ENCODE measurements at regions of chr5 and their contacts with region 1.

Region 1: DNA sequence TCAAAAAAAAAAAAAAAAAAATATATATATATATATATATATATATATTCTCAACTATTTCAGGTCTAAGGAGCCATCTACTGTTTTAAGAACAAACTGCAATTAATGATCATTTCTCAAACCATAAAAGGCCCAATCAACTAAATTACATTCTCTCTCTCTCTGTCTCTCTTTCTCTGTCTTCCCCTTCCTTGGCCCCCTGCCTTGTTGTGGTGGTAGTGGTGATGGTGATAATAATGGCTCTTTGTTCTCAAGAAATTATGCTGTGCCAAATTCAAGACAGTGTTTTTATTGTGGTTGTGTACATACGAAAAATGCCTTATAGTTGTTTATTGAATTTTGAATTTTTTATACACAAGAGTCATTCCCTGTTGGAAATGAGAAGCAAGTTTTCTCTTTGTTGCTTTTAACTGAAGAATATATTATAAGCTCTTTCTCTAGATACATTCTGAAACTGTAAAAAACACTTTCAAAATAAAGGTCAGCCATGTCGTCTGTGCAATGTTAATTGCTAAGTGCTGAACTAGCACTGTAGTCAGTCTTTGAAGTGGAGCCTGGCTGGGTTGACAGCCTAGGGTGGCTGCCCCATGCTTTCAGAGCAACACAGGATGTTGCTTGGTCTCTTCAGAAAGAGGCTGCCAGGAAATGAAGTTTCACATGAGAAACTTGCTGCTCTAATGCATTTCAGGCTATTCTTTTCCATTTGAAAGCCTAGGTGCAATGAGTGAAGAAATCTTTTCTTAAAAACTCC is 96.0 kb downstream of the HINT1 start:
- DNase-seq: peak; percentile 87
- H3K4me3 Mint-ChIP-seq: no peak overlapping the region
- H3K27ac Mint-ChIP-seq: peak overlapping the region; percentile 94
- H3K4me1 Mint-ChIP-seq: peaks cover 55% of the 10 kb centered on the region
- H3K27me3 Mint-ChIP-seq: no peaks in the 10 kb centered on the region

Region 2: GRCh38 chr5:130282049-130282448 is 787.0 kb before region 1 on chr5:
- CTCF ChIA-PET with region 1: no interaction called
- intact Hi-C with region 1: no loop called
- DNase-seq: no peak
- H3K4me3 Mint-ChIP-seq: no peak overlapping the region
- H3K27ac Mint-ChIP-seq: no peak overlapping the region
- H3K4me1 Mint-ChIP-seq: no peaks in the 10 kb centered on the region
- H3K27me3 Mint-ChIP-seq: peaks cover 3% of the 10 kb centered on the region

Region 3: GRCh38 chr5:130871346-130872086 is 197.6 kb before region 1 on chr5:
- CTCF ChIA-PET with region 1: interaction called, 11 read pairs
- intact Hi-C with region 1: loop called (anchors 1 kb)
- DNase-seq: peak; percentile 53
- H3K4me3 Mint-ChIP-seq: no peak overlapping the region
- H3K27ac Mint-ChIP-seq: no peak overlapping the region
- H3K4me1 Mint-ChIP-seq: no peaks in the 10 kb centered on the region
- H3K27me3 Mint-ChIP-seq: no peaks in the 10 kb centered on the region

Region 4: GRCh38 chr5:131081374-131081773 is 12.3 kb after region 1 on chr5:
- CTCF ChIA-PET with region 1: interaction called, 6 read pairs
- intact Hi-C with region 1: loop called (anchors 1 kb)
- DNase-seq: no peak
- H3K4me3 Mint-ChIP-seq: no peak overlapping the region
- H3K27ac Mint-ChIP-seq: no peak overlapping the region
- H3K4me1 Mint-ChIP-seq: peaks cover 18% of the 10 kb centered on the region
- H3K27me3 Mint-ChIP-seq: no peaks in the 10 kb centered on the region

Region 5: GRCh38 chr5:131096774-131097710 is 28.0 kb after region 1 on chr5:
- CTCF ChIA-PET with region 1: interaction called, 4 read pairs
- intact Hi-C with region 1: loop called (anchors 1 kb)
- DNase-seq: no peak
- H3K4me3 Mint-ChIP-seq: no peak overlapping the region
- H3K27ac Mint-ChIP-seq: no peak overlapping the region
- H3K4me1 Mint-ChIP-seq: peaks cover 13% of the 10 kb centered on the region
- H3K27me3 Mint-ChIP-seq: no peaks in the 10 kb centered on the region

Region 6: GRCh38 chr5:131104169-131104808 is 35.2 kb after region 1 on chr5:
- CTCF ChIA-PET with region 1: interaction called, 4 read pairs
- intact Hi-C with region 1: loop called (anchors 1 kb)
- DNase-seq: no peak
- H3K4me3 Mint-ChIP-seq: no peak overlapping the region
- H3K27ac Mint-ChIP-seq: no peak overlapping the region
- H3K4me1 Mint-ChIP-seq: peaks cover 12% of the 10 kb centered on the region
- H3K27me3 Mint-ChIP-seq: no peaks in the 10 kb centered on the region

Region 7: DNA sequence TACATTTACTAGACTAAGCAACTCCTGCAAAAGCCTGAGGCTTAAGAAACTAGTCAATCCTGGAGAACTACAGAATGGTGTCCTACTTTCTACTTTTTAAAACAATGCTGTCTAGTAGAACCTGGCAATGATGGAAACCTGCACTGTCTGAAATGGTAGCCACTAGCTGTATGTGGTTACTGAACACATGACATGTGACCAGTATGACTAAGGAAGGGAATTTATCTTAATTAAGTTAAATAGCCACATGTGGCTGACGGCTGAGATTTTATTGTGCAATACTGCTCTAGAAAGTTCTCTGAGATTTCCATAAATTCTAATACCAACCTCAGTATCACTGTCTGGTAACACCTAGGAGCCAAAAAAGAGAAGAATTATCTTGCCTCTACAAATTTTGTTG is 610.8 kb after region 1 on chr5:
- CTCF ChIA-PET with region 1: no interaction called
- intact Hi-C with region 1: no loop called
- DNase-seq: no peak
- H3K4me3 Mint-ChIP-seq: no peak overlapping the region
- H3K27ac Mint-ChIP-seq: no peak overlapping the region
- H3K4me1 Mint-ChIP-seq: no peaks in the 10 kb centered on the region
- H3K27me3 Mint-ChIP-seq: no peaks in the 10 kb centered on the region

Region 8: GRCh38 chr5:131854134-131854533 is 785.1 kb after region 1 on chr5:
- CTCF ChIA-PET with region 1: no interaction called
- intact Hi-C with region 1: loop called (anchors 10 kb)
- DNase-seq: peak; percentile 37
- H3K4me3 Mint-ChIP-seq: no peak overlapping the region
- H3K27ac Mint-ChIP-seq: no peak overlapping the region
- H3K4me1 Mint-ChIP-seq: peaks cover 10% of the 10 kb centered on the region
- H3K27me3 Mint-ChIP-seq: no peaks in the 10 kb centered on the region